GM13977 (cell line): ENCODE measurements at regions of chr19 and their contacts with region 1.

Region 1: DNA sequence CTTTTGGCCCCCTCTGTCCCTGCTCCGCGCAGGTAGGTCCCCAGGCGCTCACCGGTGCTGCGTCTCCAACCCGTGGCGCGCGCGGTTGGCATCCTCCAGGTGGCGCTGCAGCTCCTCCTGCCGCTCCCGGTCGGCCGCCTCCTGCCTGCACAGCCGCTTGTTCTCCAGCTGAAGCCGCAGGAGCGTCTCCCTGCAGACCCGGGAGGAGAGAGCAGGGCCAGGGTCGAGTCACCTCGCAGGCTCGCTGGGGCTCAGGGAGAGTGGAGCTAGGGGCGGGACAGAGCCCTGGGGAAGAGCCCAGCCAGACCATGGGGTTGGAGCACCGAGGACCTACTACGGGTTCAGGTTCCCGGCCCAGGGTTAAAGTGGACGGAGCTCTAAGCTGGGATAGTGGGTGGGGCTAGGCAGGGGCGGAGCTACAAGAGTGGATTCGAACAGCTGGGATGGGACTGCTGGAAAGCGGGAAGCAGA is 9.3 kb downstream of the HOOK2 start:
- DNase-seq: peak; percentile 87
- CTCF ChIP-seq: peak; percentile 99

Region 2: DNA sequence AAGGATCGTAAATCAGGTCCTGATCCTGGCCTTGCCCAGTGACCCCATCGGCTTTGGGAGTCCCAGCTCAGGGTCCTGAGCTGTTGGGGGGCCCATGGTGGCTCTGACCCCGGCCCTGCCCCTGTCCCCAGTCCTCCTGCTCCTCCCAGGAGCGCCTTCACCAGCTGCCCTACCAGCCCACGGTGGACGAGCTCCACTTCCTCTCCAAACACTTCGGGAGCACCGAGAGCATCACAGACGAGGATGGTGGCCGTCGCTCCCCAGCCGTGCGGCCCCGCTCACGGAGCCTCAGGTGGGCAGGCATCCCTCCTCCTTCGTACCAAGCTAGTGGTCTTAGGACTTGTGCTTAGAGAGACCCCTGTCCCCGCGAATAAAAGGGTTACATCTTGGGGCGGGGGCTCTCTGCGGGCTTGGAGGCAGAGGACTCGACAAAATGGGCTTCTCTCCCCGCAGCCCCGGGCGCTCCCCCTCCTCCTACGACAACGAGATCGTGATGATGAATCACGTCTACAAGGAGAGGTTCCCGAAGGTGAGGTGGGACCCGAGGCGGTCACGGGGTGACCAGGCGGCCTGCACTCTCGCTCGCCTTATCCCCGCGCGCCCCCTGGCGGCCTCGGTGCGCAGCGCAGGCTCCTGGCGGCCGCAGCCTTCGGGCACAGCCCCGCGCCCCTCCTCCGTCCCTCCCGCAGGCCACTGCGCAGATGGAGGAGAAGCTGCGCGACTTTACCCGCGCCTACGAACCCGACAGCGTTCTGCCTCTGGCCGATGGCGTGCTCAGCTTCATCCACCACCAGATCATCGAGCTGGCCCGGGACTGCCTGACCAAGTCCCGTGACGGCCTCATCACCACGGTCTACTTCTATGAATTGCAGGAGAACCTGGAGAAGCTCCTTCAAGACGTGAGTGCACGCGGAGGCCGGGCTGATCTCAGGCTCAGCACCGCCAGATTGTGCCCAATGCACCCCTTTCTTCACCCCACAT is 81.4 kb after region 1 on chr19:
- in situ Hi-C with region 1: loop called (anchors 10 kb)
- DNase-seq: peak; percentile 93
- CTCF ChIP-seq: peak; percentile 100

Region 3: GRCh38 chr19:12890787-12891552 is 124.9 kb after region 1 on chr19 and contains the start of gene GCDH:
- in situ Hi-C with region 1: no loop called
- DNase-seq: peak; percentile 97
- CTCF ChIP-seq: no peak